ENCODE measurements at regions of chr17 and their contacts with region 1.

Region 1: DNA sequence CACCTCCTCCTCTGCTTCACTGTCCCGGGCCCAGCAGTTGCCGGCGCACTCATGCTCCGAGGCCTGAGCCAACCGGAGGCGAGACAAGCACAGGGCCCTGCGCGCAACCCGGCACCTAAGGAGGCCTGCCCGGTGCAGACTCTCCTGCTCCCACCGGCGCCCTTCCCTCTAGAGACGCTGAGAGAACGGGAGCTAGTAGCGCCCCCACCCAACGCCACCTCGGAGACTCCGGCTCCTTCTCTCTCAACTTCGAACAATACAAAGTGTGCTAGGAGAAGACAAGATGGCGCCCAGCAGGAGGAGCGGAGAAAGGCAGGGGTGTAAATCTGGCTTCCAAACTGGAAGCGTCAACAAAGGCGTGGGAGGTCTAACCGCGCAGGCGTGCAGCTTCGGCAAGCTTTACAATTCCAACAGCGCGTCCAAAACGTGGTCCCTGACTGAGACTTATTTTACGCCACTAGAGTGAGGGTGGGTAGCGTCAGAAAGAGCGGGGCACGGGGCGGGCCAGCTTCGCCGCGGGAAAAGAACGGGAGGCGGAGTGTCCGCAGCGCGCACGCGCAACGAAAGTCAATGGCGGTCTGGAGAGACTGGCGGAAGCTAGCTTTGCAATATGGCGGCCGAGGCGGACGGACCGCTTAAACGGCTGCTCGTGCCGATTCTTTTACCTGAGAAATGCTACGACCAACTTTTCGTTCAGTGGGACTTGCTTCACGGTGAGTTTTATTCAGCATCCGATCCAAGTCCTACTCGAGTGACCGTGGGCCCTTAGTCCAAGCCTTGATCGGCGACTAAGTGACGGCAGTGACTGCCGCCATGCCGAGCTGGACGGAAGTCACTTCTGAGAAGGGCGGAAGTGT is at the start of gene MPDU1:
- H3K4me3 ChIP-seq: peak within 1 kb of the TSS; percentile 86
- H3K27ac ChIP-seq: peak within 1 kb of the TSS; percentile 95
- H3K4me1 ChIP-seq: peaks cover 8% of the 10 kb centered on the region; the same call in 1 of the 2 replicates
- CTCF ChIP-seq: peak; percentile 52

Region 2: DNA sequence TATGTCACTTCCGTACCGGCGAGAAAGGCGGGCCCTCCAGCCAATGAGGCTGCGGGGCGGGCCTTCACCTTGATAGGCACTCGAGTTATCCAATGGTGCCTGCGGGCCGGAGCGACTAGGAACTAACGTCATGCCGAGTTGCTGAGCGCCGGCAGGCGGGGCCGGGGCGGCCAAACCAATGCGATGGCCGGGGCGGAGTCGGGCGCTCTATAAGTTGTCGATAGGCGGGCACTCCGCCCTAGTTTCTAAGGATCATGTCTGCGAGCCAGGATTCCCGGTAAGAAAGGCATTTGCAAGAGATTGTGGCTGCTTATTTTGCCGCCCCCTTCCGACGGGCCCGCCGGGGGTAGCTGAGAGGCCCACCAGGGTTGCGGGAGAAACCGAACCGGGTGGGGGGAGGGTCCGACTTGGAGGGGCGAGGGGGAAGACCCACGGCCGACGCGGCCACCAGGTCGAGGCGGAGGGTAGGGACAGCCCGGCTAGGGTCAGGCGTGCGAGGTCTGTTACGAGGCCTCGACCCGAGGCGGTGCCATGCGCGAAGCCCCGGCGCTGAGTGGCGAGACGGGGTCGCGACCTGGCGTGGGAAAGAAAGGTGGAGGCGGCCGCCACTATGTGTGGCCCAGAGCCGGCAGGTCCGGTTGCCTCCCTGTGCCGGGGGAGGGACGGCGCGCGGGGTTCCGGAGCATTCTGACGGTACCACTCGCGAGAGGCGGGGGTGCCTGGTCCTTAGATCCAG is 10.7 kb before region 1 on chr17:
- CTCF ChIA-PET with region 1: interaction called, 5 read pairs
- POLR2A ChIA-PET with region 1: interaction called, 98 read pairs
- H3K4me3 ChIP-seq: peak overlapping the region; percentile 97
- H3K27ac ChIP-seq: peak overlapping the region; percentile 98
- H3K4me1 ChIP-seq: peaks cover 5% of the 10 kb centered on the region
- CTCF ChIP-seq: 0 out of 2 replicates have a peak, but pooled peaks have one; percentile 38

Region 3: DNA sequence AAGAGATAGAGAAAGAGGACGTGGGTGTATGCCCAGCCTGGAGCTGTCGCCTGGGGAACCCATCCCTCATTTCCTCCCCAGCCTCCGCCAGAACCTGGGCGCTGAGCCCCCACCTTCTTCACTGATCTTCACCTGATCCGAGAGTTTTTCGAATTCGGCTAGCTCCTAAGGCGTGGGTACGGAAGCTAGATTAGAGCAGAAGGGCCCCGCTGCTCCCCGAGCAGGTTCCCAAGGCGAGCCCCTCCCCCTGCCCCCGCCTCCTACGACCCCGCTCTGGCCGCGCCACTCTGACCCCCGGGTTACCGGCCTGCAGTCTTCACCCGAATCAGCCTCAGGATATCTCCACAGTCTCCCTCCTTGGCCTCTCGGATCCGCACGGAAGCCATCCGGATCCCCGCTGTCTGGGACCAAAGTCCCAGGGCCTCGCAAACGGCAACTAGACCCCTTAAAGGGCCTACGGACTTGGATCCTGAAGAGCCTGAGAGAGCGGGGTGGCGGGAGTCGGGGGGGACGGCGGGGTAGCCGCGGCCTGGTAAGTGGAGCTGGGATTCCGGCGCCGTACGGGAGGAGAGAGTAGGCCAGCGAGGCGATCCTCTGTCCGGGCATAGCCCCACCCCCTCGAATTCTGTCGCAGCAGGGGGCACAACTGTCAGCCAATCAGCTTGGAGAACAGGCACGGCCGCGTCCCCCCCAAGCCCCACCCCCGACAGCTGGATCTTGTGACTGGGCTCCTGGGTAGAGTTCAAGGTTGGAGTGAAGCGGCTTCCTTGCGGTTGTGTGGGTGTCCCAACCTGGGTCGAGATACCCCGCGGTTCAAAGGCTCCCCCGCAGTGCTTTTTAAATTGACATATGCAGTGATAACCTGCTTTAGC is 44.0 kb after region 1 on chr17 and contains the start of gene SAT2:
- CTCF ChIA-PET with region 1: interaction called, 6 read pairs
- POLR2A ChIA-PET with region 1: interaction called, 21 read pairs
- H3K4me3 ChIP-seq: peak within 1 kb of the TSS; percentile 84
- H3K27ac ChIP-seq: peak within 1 kb of the TSS; percentile 91
- H3K4me1 ChIP-seq: peaks cover 3% of the 10 kb centered on the region; the same call in 1 of the 2 replicates
- CTCF ChIP-seq: no peak

Region 4: GRCh38 chr17:7786866-7787265 is 203.4 kb after region 1 on chr17:
- CTCF ChIA-PET with region 1: no interaction called
- POLR2A ChIA-PET with region 1: no interaction called
- H3K4me3 ChIP-seq: no peak overlapping the region
- H3K27ac ChIP-seq: no peak overlapping the region
- H3K4me1 ChIP-seq: no peaks in the 10 kb centered on the region
- CTCF ChIP-seq: no peak